GM12878 (cell line): ENCODE measurements at regions of chr7 and their contacts with region 1.

Region 1: DNA sequence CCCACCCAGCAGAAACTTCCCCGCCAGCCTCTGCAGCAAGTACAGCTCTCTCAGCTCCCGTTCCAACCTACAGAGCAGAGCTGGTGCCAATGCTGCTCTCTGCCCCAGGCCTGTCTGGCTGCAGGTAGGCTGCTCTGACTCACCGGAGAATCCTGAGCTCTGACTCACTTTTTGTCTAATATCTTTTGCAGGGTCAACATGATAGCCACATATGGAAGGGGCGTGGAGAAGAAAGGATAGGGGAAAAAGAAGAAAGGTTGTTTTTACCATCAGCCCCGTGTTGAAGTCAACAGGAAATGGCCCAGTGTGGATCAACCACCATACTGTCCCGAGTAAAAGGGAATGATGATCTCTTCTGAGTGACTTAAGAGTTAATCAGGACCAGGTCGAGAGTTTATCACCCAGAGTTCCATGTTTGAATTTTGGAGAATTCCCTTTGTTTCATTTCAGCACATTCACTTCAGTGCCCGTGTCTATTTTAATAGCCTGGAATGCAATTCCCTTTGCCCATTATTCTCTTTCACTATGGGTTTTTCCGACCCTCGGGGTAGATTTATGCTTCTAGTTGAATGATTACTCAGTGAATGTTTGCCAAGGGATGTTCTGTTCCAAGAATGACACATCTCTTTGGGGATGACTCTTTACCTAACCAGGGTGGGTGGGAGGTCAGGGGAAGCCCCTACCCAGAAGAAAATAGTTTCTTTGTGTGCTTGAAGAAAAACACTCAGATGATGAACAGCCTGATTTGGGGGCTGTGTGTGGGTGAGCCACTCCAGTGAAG is 595.0 kb downstream of the INHBA start:
- DNase-seq: peak; percentile 4
- ATAC-seq: peak; percentile 71
- H3K4me3 ChIP-seq: no peak overlapping the region
- H3K27ac ChIP-seq: no peak overlapping the region
- H3K4me1 ChIP-seq: no peaks in the 10 kb centered on the region
- H3K27me3 ChIP-seq: no peaks in the 10 kb centered on the region
- CTCF ChIP-seq: no peak
- EP300 ChIP-seq: peak in 1 of 2 experiments; percentile 21; a peak in 1 of 4 replicates
- POLR2A ChIP-seq: no peak
- RAD21 ChIP-seq: no peak

Region 2: GRCh38 chr7:41045556-41046123 is 62.2 kb before region 1 on chr7:
- CTCF ChIA-PET with region 1: no interaction called
- POLR2A ChIA-PET with region 1: no interaction called
- RAD21 ChIA-PET with region 1: interaction called, 9 read pairs
- SMC1A ChIA-PET with region 1: interaction called, 3 read pairs
- in situ Hi-C with region 1: no loop called
- intact Hi-C with region 1: loop called (anchors 5 kb)
- DNase-seq: no peak
- ATAC-seq: peak; percentile 77
- H3K4me3 ChIP-seq: no peak overlapping the region
- H3K27ac ChIP-seq: no peak overlapping the region
- H3K4me1 ChIP-seq: no peaks in the 10 kb centered on the region
- H3K27me3 ChIP-seq: no peaks in the 10 kb centered on the region
- CTCF ChIP-seq: peak in 2 of 3 experiments; percentile 11 to 53; a peak in 3 of 6 replicates
- EP300 ChIP-seq: no peak
- POLR2A ChIP-seq: no peak
- RAD21 ChIP-seq: peak; percentile 73

Region 3: DNA sequence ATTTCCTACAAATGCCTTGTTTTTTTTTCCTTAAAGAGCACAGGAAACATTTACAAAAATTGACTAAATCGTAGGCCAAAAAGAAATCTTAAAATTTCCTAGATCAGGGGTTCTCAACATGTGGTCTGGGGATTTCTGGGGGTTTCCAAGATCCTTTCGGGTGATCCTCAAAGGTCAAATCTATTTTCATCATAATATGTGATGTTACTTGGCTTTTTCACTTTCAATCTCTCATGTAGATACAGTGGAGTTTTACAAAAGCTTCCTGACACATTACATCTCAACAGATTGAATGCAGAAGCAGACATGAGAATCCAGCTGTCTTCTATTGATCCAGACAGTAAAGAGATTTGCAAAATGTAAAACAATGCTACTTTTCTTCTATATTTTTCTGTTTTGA is 97.7 kb after region 1 on chr7:
- CTCF ChIA-PET with region 1: interaction called, 3 read pairs
- POLR2A ChIA-PET with region 1: interaction called, 3 read pairs
- RAD21 ChIA-PET with region 1: interaction called, 3 read pairs
- SMC1A ChIA-PET with region 1: no interaction called
- in situ Hi-C with region 1: no loop called
- intact Hi-C with region 1: loop called (anchors 1 kb)
- DNase-seq: peak; percentile 36
- ATAC-seq: peak; percentile 82
- H3K4me3 ChIP-seq: no peak overlapping the region
- H3K27ac ChIP-seq: peak overlapping the region; percentile 50; the same call in 1 of the 2 replicates
- H3K4me1 ChIP-seq: no peaks in the 10 kb centered on the region
- H3K27me3 ChIP-seq: no peaks in the 10 kb centered on the region
- CTCF ChIP-seq: no peak
- EP300 ChIP-seq: no peak; a peak in 1 of 4 replicates
- POLR2A ChIP-seq: no peak
- RAD21 ChIP-seq: no peak